ENCODE measurements at regions of chr10 and their contacts with region 1.

Region 1: GRCh38 chr10:85047170-85047834 is 718.9 kb downstream of the CCSER2 start:
- DNase-seq: no peak
- H3K4me3 ChIP-seq: no peak overlapping the region
- H3K27ac ChIP-seq: no peak overlapping the region
- H3K4me1 ChIP-seq: no peaks in the 10 kb centered on the region
- H3K27me3 ChIP-seq: no peaks in the 10 kb centered on the region
- CTCF ChIP-seq: no peak
- EP300 ChIP-seq: no peak
- POLR2A ChIP-seq: no peak

Region 2: GRCh38 chr10:83647526-83647925 is 1399.8 kb before region 1 on chr10:
- in situ Hi-C with region 1: no loop called
- intact Hi-C with region 1: no loop called
- DNase-seq: no peak
- H3K4me3 ChIP-seq: no peak overlapping the region
- H3K27ac ChIP-seq: no peak overlapping the region
- H3K4me1 ChIP-seq: no peaks in the 10 kb centered on the region
- H3K27me3 ChIP-seq: no peaks in the 10 kb centered on the region
- CTCF ChIP-seq: no peak
- EP300 ChIP-seq: no peak
- POLR2A ChIP-seq: no peak

Region 3: DNA sequence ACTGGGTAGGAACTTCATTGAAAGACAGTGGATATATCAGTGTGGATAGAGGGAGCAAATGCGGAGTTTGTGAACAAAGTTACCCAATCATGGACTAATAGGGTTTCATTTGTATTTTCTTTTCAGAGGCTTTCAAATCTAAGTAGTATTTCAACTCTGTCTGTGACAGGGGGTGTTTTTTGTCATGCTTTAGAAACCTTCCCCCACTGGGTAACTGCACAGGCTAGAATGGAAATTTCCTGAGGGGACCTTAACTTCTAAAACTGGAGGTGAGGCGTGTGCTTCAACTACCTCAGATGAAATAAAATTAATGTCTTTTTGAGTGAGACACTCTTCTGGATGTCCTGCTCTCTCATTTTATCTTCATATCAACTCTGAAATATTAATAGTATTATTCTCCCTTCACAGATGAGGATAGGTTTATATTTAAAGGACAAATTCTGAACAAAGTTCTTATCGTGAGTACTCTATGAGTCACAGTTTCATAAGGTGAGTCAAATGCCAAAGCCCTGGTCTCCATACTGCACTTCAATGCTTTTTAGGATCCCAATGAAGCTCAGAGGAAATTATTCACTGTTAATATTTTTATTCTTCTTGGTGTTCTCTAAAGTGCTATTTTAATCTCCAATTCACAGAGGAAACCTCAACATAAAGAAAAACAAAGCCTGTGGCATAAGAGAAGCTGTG is 51.7 kb after region 1 on chr10:
- in situ Hi-C with region 1: no loop called
- intact Hi-C with region 1: no loop called
- DNase-seq: no peak
- H3K4me3 ChIP-seq: no peak overlapping the region
- H3K27ac ChIP-seq: no peak overlapping the region
- H3K4me1 ChIP-seq: no peaks in the 10 kb centered on the region
- H3K27me3 ChIP-seq: no peaks in the 10 kb centered on the region
- CTCF ChIP-seq: no peak
- EP300 ChIP-seq: no peak
- POLR2A ChIP-seq: no peak

Region 4: GRCh38 chr10:85111266-85111665 is 64.0 kb after region 1 on chr10:
- in situ Hi-C with region 1: no loop called
- intact Hi-C with region 1: loop called (anchors 2 kb)
- DNase-seq: no peak
- H3K4me3 ChIP-seq: no peak overlapping the region
- H3K27ac ChIP-seq: no peak overlapping the region
- H3K4me1 ChIP-seq: no peaks in the 10 kb centered on the region
- H3K27me3 ChIP-seq: no peaks in the 10 kb centered on the region
- CTCF ChIP-seq: no peak
- EP300 ChIP-seq: no peak
- POLR2A ChIP-seq: no peak

Measured in transverse colon (tissue), 4 donors.